ENCODE measurements at regions of chr4 and their contacts with region 1.

Region 1: GRCh38 chr4:107989537-107990386 is at the start of gene HADH:
- DNase-seq: peak; percentile 97
- total RNA-seq, gene HADH: 121 TPM

Region 2: DNA sequence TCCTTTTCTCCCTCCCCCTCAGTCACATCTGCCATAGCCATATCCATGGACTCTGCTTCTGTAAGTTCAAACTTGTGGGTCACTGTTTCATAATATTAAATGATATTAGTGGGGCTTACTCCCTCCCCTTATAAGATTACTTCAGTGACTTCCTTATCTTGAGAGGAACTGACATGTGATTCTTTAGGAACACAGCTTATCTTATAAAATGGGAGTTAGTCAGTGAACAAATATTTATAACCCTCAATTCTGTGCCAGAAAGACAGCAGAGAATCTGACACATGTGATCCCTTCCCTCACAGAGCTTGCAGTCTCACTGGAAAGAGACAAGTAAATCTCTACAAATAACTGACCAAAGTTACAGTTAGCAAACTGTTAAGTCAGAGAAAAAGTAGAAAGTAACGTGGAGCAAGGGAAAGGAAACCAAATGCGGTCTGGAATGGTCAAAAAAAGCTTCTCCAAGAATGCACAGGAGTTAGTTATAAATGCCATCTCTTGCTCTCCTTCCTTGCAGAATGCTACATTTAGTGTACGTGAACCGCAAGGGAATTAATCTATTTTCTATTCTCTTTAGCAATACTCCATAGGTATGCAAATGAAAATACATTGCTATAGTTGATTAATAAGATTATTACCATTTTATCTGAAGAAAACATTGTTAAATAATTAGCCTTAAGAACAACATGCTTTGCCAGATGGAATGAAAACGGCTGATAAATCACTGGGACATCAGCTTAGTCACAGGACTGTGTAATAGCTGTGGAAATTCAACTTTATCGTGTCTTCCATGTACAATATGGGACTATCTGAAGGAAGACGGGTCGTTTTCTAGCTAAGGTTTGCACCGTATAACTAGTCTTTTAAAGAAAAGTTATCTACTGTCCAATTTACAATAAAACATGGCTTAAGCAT is 136.1 kb before region 1 on chr4:
- intact Hi-C with region 1: no loop called
- DNase-seq: no peak

Region 3: GRCh38 chr4:107930821-107931774 is 58.7 kb before region 1 on chr4 and contains the start of gene CYP2U1:
- intact Hi-C with region 1: loop called (anchors 2 kb)
- DNase-seq: peak; percentile 94
- total RNA-seq, gene CYP2U1: 10.8 TPM